Right ventricle myocardium inferior (tissue), 1 donor: ENCODE measurements at regions of chr17 and their contacts with region 1.

Region 1: GRCh38 chr17:3636154-3636907 is at the starts of genes CTNS and SHPK:
- DNase-seq: peak; percentile 99
- ATAC-seq: peak; percentile 98
- total RNA-seq, gene CTNS: 6.6 TPM
- total RNA-seq, gene SHPK: 4.4 TPM

Region 2: DNA sequence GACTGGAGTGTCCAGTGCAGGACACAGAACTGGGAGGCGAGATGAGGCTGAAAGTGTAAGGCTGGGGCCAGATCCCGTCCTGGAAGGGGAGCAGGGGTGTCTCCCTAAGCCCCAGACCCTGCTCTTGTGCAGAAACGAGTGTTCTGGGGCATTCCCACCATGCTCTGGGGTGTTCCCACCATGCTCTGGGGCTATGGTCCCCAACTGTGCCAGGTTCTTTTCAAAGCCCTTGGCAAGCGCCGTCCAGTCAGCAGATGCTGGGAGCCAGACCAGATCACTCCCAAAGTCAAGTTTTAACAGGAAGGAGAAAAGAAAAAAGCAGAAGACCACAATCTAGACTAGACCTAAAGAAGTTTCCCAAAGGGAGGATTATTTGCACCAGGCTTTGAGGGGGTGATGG is 29.5 kb after region 1 on chr17:
- intact Hi-C with region 1: loop called (anchors 1 kb)
- DNase-seq: peak; percentile 74
- ATAC-seq: no peak

Region 3: DNA sequence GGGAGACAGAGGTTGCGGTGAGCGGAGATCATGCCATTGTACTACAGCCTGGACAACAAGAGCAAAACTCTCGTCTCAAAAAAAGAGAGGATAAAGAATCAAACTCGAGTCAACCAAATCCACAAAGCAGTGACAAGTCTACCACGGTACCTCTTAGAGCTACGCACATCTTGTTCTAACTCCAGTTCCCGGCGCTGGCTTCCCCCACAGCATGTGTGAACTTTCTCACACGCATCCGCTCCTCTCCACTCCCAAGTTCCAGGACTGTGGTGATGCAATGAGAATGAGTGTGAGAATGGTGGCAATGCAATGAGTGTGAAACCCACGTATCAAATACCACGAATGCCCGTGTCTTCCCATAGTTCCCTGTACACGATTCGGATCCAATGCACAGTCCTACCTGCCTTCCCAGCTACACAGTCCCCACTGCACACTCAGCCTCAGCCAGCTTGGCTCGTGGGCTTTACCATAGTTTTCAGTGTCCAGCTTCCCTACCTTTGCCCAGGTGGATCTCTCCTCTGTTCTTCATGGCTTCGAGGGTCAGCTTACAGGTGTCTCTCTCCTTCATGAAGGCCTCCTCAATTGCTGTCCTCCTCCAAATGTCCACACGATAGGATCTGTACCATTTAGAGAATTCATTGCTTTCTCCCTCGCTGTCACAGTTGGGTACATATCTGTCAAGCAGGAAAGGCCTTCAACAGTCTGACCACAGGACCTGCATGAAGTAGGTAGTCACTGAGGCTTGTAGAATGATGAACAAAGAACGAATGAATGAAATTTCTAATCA is 68.8 kb after region 1 on chr17:
- intact Hi-C with region 1: no loop called
- DNase-seq: peak; percentile 6
- ATAC-seq: no peak